Naive thymus-derived CD8-positive, alpha-beta T cell (primary cell): ENCODE measurements at regions of chr21 and their contacts with region 1.

Region 1: GRCh38 chr21:46605767-46606426 is 1.0 kb upstream of the S100B start:
- DNase-seq: peak in 9 of 10 donors; percentile 37 to 80 (median 51)
- ATAC-seq: peak; percentile 88 to 91
- H3K4me3 Mint-ChIP-seq: peak overlapping the region; percentile 16 to 92 (median 85)
- H3K27ac Mint-ChIP-seq: peak overlapping the region; percentile 82 to 95 (median 93)
- H3K4me1 Mint-ChIP-seq: peaks cover 35 to 79% (median 57%) of the 10 kb centered on the region in 4 donors
- H3K27me3 Mint-ChIP-seq: no peaks in the 10 kb centered on the region

Region 2: DNA sequence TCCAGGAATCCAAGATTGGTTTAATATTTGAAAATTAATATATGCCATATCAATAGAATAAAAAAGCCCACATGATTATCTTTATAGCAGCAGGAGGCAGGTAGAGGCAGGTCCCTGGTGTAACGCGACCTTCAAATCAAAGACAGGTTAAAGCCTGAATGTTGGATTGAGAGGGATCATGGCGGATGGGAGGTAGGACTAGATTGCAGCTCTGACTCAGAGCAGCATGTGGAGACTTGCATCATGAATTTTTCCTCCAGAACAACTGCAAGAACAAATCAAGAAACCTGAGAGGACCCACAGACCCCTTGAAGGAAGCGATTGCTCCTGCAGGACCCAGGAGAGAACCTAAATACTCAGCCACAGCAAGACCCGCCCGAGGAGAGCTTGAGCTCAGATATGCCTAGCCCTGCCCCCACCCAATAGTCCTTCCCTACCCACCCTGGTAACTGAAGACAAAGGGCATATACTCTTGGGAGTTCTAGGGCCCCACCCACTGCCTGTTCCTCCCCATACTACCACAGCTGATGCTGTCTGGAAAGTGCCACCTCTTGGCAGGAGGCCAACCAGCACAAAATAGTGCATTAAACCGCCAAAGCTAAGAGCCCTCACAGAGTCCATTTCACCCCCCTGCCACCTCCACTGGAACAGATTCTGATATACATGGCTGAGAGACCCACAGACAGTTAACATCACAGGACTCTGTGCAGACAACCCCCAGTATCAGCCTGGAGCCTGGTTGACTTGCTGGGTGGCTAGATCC is 20.5 kb before region 1 on chr21:
- POLR2A ChIA-PET with region 1: interaction called, 12 read pairs
- DNase-seq: no peak
- ATAC-seq: no peak
- H3K4me3 Mint-ChIP-seq: peak overlapping the region in 5 of 10 donors; percentile 10 to 42 (median 18)
- H3K27ac Mint-ChIP-seq: peak overlapping the region in 6 of 10 donors; percentile 8 to 72 (median 46)
- H3K4me1 Mint-ChIP-seq: peaks cover 24 to 50% (median 39%) of the 10 kb centered on the region in 4 donors
- H3K27me3 Mint-ChIP-seq: peaks cover 0 to 3% (median 0%) of the 10 kb centered on the region in 5 donors

Region 3: GRCh38 chr21:46622226-46622625 is 16.3 kb after region 1 on chr21:
- POLR2A ChIA-PET with region 1: interaction called, 79 read pairs
- DNase-seq: peak; percentile 17 to 88 (median 74)
- ATAC-seq: peak; percentile 73 to 79
- H3K4me3 Mint-ChIP-seq: peak overlapping the region; percentile 53 to 74 (median 66)
- H3K27ac Mint-ChIP-seq: peak overlapping the region; percentile 90 to 100 (median 98)
- H3K4me1 Mint-ChIP-seq: peaks cover 34 to 77% (median 64%) of the 10 kb centered on the region in 4 donors
- H3K27me3 Mint-ChIP-seq: no peaks in the 10 kb centered on the region